CD8-positive, alpha-beta T cell (primary cell): ENCODE measurements at regions of chr1 and their contacts with region 1.

Region 1: DNA sequence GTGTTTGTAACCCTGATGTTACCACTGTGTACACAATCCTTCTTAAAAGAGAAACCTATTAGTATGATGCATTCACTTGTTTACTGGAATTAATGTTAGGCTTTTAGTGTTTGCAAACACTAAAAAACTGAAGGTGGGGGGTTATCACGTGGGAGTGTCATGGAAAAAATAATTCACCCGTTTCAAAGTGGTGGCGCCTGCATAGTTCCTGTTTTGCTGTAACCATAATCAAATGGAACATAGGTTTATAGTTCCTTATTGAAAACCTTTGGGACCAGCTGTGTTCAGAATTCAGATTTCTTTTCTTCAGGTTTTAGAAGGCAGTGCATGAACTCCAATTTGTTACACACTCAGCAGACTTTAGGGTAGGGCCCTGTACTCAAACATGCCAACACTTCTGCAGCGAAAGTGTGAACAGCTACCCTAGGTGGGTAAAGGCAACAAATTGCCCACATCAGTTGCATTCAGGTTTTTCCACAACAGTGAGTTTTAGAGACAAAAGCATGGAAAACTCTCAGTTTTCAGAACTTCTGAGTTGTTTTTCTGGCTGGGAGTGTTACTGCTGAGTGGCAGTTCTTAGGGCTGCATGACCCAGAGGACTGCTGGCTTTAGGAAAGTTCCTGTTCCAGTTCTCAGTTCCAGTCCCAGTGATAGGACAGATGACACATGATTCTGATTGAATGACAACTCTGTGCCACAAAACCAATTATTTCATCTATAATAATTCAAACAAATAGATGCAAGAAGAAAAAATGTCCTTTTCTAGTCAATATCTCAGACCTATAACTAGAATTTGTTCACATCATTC is 29.1 kb upstream of the IVNS1ABP start:
- DNase-seq: no peak
- ATAC-seq: no peak
- H3K4me3 ChIP-seq: no peak overlapping the region
- H3K4me3 Mint-ChIP-seq: no peak overlapping the region
- H3K27ac ChIP-seq: no peak overlapping the region
- H3K27ac Mint-ChIP-seq: no peak overlapping the region
- H3K4me1 ChIP-seq: peaks cover 6% of the 10 kb centered on the region
- H3K4me1 Mint-ChIP-seq: peaks cover 21% of the 10 kb centered on the region
- H3K27me3 ChIP-seq: no peaks in the 10 kb centered on the region
- H3K27me3 Mint-ChIP-seq: no peaks in the 10 kb centered on the region
- CTCF ChIP-seq: no peak

Region 2: GRCh38 chr1:185398599-185398998 is 52.5 kb after region 1 on chr1:
- CTCF ChIA-PET with region 1: no interaction called
- POLR2A ChIA-PET with region 1: no interaction called
- intact Hi-C with region 1: loop called in 1 of 2 experiments (anchors 10 kb)
- DNase-seq: no peak
- ATAC-seq: no peak
- H3K4me3 ChIP-seq: no peak overlapping the region
- H3K4me3 Mint-ChIP-seq: no peak overlapping the region
- H3K27ac ChIP-seq: no peak overlapping the region
- H3K27ac Mint-ChIP-seq: no peak overlapping the region
- H3K4me1 ChIP-seq: no peaks in the 10 kb centered on the region
- H3K4me1 Mint-ChIP-seq: peaks cover 2% of the 10 kb centered on the region
- H3K27me3 ChIP-seq: no peaks in the 10 kb centered on the region
- H3K27me3 Mint-ChIP-seq: peaks cover 3% of the 10 kb centered on the region
- CTCF ChIP-seq: no peak

Region 3: DNA sequence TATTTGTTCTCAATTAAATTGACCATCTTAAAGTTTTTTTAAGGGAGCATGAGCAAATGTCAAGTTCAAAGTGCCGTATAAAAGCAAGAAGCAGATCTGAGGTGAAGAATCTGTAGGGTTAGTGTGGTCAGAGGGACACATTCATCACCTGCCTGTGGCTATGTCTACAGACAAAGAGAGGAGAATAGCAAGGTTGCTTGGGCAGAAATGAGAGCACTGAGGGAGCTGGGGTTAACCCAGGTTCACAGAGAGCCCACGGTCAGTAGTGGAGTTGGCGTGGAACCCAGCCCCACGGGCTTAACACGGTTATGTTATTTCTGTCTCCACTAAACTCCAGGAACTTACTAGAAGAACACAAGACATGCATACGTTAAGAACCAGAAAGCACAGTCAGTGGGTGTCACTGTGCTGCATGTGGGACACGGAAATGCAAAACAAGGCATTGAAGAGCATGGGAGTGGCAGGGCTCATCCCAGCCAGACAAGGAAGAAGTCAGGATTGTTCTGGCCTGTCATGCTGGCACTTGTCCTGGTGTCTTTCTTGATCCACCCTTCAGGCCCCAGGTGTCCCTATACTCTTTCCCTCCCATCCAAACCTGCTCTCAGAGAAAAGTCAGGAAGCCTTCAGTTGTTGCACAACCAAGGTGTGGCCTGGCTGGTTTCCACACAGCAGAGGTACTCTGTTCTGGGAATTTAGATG is 66.4 kb after region 1 on chr1:
- CTCF ChIA-PET with region 1: no interaction called
- POLR2A ChIA-PET with region 1: no interaction called
- intact Hi-C with region 1: loop called in 1 of 2 experiments (anchors 10 kb)
- DNase-seq: peak in 1 of 9 experiments; percentile 18
- ATAC-seq: no peak
- H3K4me3 ChIP-seq: no peak overlapping the region
- H3K4me3 Mint-ChIP-seq: no peak overlapping the region
- H3K27ac ChIP-seq: peak overlapping the region in 1 of 2 experiments; percentile 42
- H3K27ac Mint-ChIP-seq: no peak overlapping the region
- H3K4me1 ChIP-seq: no peaks in the 10 kb centered on the region
- H3K4me1 Mint-ChIP-seq: peaks cover 5% of the 10 kb centered on the region
- H3K27me3 ChIP-seq: no peaks in the 10 kb centered on the region
- H3K27me3 Mint-ChIP-seq: no peaks in the 10 kb centered on the region
- CTCF ChIP-seq: no peak

Region 4: DNA sequence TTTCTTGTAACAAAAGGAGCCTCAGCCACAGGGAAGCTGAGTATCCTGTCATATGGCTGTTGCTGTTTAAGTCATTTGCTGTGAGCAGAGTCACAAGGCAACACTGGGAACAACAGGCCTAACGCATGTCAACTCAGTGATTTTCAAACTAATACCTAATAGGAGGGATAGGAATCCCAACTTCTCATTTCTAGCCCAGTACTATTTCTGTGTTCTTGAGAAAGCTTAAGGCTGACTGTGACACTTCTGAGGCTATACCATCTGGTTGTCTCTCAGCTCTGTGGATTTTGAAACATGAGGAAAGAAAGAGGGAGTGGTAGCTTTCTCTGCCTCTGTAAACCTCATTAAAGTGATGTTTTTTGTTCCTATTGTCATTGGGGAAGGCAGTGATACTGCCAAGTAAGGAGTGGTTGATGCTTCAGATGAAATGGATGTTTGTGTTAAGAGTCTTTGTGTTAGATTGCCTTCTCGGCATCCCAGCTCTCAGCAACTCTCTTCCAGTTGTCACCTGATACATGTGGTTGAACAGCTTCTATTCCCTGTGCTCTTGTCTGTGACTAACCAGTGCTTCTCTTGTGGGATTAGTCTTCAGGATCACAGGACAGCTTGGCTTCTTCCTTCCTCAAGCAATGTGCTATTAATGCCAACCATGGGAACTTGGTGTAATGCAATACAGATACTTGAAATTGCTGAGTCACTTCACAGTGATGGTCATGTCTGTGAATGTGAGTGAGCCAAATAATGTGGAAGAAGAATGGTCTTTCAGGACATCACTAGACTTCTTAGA is 137.7 kb after region 1 on chr1:
- CTCF ChIA-PET with region 1: no interaction called
- POLR2A ChIA-PET with region 1: no interaction called
- intact Hi-C with region 1: no loop called
- DNase-seq: peak in 1 of 9 experiments; percentile 4
- ATAC-seq: no peak
- H3K4me3 ChIP-seq: no peak overlapping the region
- H3K4me3 Mint-ChIP-seq: no peak overlapping the region
- H3K27ac ChIP-seq: no peak overlapping the region
- H3K27ac Mint-ChIP-seq: no peak overlapping the region
- H3K4me1 ChIP-seq: no peaks in the 10 kb centered on the region
- H3K4me1 Mint-ChIP-seq: no peaks in the 10 kb centered on the region
- H3K27me3 ChIP-seq: no peaks in the 10 kb centered on the region
- H3K27me3 Mint-ChIP-seq: no peaks in the 10 kb centered on the region
- CTCF ChIP-seq: no peak

Region 5: DNA sequence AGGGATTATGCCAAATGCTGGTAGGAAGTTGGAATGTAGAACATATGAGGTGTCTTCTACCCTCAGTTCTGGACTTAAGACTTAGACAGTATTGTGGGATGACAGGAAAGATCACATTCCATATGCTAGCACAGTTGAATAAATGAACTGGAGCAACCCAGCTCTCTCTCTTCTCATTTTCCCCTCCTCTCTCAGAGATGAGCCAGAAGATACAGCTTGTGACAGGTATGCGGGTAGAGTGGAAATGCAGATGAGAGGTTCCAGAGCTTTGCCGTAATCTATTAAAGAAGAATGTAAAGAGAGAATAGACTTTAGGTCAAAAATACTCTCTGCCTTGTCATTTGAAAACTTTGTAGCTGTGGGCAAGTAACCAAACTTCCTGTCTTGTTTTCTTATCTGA is 355.5 kb after region 1 on chr1:
- CTCF ChIA-PET with region 1: no interaction called
- POLR2A ChIA-PET with region 1: no interaction called
- intact Hi-C with region 1: no loop called
- DNase-seq: no peak
- ATAC-seq: no peak
- H3K4me3 ChIP-seq: no peak overlapping the region
- H3K4me3 Mint-ChIP-seq: no peak overlapping the region
- H3K27ac ChIP-seq: no peak overlapping the region
- H3K27ac Mint-ChIP-seq: no peak overlapping the region
- H3K4me1 ChIP-seq: no peaks in the 10 kb centered on the region
- H3K4me1 Mint-ChIP-seq: no peaks in the 10 kb centered on the region
- H3K27me3 ChIP-seq: no peaks in the 10 kb centered on the region
- H3K27me3 Mint-ChIP-seq: peaks cover 26% of the 10 kb centered on the region
- CTCF ChIP-seq: no peak

Region 6: DNA sequence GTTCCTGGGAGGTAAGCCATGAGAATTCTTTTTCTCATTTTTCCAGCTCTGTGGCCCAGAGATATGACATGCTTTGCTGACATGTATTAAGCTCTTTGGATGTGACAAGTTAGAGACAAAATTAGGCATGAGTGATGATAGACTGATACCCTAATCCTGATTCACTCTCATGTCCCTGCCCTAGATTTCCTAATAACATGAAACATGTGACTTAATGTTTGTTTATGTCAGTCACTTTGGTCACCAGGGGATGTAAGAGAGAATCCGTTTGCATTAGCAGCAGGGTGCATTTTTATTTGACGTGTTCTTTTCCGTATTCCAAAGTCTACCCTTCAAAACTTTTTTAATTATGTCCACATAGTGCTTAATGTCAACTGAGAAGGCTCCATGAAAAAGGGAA is 580.4 kb after region 1 on chr1:
- CTCF ChIA-PET with region 1: no interaction called
- POLR2A ChIA-PET with region 1: no interaction called
- intact Hi-C with region 1: no loop called
- DNase-seq: no peak
- ATAC-seq: no peak
- H3K4me3 ChIP-seq: no peak overlapping the region
- H3K4me3 Mint-ChIP-seq: no peak overlapping the region
- H3K27ac ChIP-seq: no peak overlapping the region
- H3K27ac Mint-ChIP-seq: no peak overlapping the region
- H3K4me1 ChIP-seq: no peaks in the 10 kb centered on the region
- H3K4me1 Mint-ChIP-seq: no peaks in the 10 kb centered on the region
- H3K27me3 ChIP-seq: no peaks in the 10 kb centered on the region
- H3K27me3 Mint-ChIP-seq: peaks cover 5% of the 10 kb centered on the region
- CTCF ChIP-seq: no peak